ENCODE measurements at regions of chr6 and their contacts with region 1.

Region 1: DNA sequence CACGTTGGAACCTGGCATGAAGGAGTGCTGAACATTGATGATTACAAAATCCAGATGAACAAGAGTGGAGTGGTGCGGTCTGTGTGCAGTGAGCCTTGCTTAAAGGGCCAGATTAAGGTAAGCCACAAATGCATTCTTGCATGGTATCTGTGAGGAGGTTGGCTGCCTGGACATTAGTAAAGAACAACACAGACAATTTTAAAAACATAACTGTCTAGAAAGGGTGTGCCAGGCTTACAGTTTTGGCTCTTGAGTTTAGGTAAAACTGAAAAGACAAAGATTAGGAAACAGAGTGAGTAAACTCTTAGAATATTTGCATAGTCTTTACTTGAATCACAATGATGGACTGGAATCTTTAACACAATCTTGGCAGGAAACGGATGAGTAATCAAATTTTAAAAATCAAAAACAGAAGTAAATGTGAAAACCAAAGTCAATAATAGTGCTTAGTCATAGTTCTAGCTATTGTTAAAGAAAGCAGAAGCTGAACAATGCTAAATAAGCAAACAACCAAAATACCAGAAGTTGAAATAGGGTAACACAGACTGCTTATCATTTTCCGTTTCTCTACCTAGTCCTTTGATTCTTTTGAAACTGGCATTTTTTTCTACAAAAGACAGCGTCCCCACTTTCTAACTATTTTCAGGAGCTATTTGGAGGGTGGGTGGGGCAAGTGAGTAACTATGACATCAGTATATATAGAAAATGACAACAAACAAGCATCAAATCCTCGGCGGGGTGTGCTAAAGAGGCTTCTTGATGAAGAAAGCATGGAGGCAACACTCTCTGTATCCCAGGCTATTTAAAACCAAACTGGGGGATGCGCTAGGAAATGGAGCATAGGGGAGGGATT is 185.8 kb upstream of the RAB32 start:
- DNase-seq: peak; percentile 64
- H3K4me3 ChIP-seq: no peak overlapping the region
- H3K27ac ChIP-seq: no peak overlapping the region
- H3K4me1 ChIP-seq: peaks cover 31% of the 10 kb centered on the region
- H3K27me3 ChIP-seq: no peaks in the 10 kb centered on the region
- CTCF ChIP-seq: no peak

Region 2: DNA sequence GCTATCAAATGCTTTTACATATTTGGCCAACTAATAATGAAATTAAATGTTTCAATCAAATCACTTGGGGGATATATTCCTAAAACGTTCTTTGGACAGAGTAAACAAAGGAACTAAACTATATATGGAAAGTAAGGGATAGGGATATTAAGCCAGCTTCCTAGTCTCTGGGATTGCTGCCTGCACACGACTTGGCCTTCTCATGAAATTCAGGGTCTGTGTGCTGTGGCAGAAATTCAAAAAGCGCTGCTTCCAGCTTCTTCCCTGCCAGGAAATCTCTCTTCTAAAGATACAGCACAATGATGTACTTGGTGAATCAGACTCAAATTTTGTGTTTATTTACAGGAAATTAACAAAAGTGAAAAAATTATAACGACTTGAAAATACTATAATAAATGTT is 20.4 kb before region 1 on chr6:
- CTCF ChIA-PET with region 1: no interaction called
- POLR2A ChIA-PET with region 1: no interaction called
- intact Hi-C with region 1: loop called (anchors 2 kb)
- DNase-seq: no peak
- H3K4me3 ChIP-seq: no peak overlapping the region
- H3K27ac ChIP-seq: no peak overlapping the region
- H3K4me1 ChIP-seq: peaks cover 30% of the 10 kb centered on the region
- H3K27me3 ChIP-seq: no peaks in the 10 kb centered on the region
- CTCF ChIP-seq: no peak